ENCODE measurements at regions of chr3 and their contacts with region 1.

Region 1: DNA sequence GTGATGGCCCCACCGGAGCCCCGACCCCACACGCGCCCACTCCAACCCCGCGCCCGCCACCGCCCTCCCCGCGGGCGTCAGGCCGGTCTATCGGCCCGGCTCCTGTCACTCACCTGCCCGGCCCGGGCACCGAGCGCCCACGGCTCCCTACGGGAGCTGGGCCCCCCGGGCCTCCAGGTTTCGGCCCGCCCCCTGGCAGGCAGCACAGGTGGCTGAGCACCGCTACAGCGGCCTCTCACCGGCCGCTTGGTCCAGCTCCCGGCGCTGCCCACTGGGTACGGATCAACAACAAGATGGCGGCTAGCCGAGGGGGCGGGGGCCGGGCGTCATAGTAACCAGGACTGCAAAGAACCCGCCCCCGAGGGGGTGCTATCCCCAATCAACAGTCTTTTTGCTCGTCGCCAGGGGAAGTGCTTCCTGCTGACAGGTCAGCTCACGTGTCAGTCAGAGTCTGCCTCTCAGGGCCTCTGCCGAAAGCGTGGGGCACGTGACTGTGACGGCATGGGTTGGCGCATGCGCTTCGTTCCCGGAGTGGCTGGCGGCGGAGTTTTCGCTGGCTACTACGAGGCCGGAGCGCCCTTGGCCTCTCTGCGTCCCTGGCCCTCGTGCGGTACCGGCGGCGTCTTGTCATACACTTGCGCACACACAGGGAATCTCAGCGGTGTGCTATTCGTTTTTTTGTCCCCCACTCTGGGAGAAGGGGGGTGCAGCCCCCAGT is at the start of gene IP6K1:
- DNase-seq: peak; percentile 100
- H3K4me3 ChIP-seq: peak within 1 kb of the TSS; percentile 61 to 96 (median 92)
- H3K27ac ChIP-seq: peak within 1 kb of the TSS; percentile 94 to 97 (median 97)
- H3K4me1 ChIP-seq: peaks cover 23 to 42% (median 30%) of the 10 kb centered on the region in 4 donors
- H3K27me3 ChIP-seq: no peaks in the 10 kb centered on the region
- CTCF ChIP-seq: peak in 1 of 5 experiments; percentile 13
- EP300 ChIP-seq: no peak
- POLR2A ChIP-seq: peak; percentile 83
- total RNA-seq, gene IP6K1: 20.5 to 40.7 (median 39.7) TPM

Region 2: GRCh38 chr3:47817609-47818008 is 1968.8 kb before region 1 on chr3:
- in situ Hi-C with region 1: no loop called
- intact Hi-C with region 1: no loop called
- DNase-seq: no peak
- H3K4me3 ChIP-seq: no peak overlapping the region
- H3K27ac ChIP-seq: no peak overlapping the region
- H3K4me1 ChIP-seq: no peaks in the 10 kb centered on the region
- H3K27me3 ChIP-seq: no peaks in the 10 kb centered on the region
- CTCF ChIP-seq: no peak
- EP300 ChIP-seq: no peak
- POLR2A ChIP-seq: no peak

Region 3: GRCh38 chr3:49723628-49724551 is 62.5 kb before region 1 on chr3 and contains the start of gene GMPPB:
- in situ Hi-C with region 1: loop called in 1 of 4 experiments (anchors 5 kb)
- intact Hi-C with region 1: no loop called
- DNase-seq: peak; percentile 98
- H3K4me3 ChIP-seq: peak within 1 kb of the TSS; percentile 87 to 92 (median 89)
- H3K27ac ChIP-seq: peak within 1 kb of the TSS; percentile 94 to 99 (median 98)
- H3K4me1 ChIP-seq: peaks cover 18 to 46% (median 32%) of the 10 kb centered on the region in 4 donors
- H3K27me3 ChIP-seq: no peaks in the 10 kb centered on the region
- CTCF ChIP-seq: no peak
- EP300 ChIP-seq: no peak
- POLR2A ChIP-seq: peak; percentile 91
- total RNA-seq, gene GMPPB: 37.2 to 53.9 (median 44.2) TPM

Measured in transverse colon (tissue), 4 donors.